ENCODE measurements at regions of chr17 and their contacts with region 1.

Region 1: DNA sequence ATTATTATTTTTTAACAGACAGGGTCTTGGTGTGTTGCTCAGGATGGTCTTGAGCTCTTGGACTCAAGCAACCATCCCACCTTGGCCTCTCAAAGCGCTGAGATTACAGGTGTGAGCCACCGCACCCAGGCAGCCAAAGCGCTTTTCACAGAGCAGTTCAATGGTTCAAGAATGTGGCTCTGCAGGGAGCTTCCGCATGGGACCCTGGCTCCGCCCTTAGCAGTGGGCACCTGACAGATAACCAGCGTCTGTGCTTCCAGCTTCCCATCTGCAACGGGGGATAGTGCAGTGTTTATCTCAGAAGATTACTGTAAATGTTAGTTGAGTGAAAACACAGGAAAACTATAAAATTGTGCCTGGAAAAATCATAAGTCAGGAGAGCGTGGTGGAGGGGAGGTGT is 99.4 kb downstream of the KCNJ12 start:
- DNase-seq: no peak
- H3K4me3 ChIP-seq: no peak overlapping the region
- H3K27ac ChIP-seq: no peak overlapping the region
- H3K4me1 ChIP-seq: no peaks in the 10 kb centered on the region
- H3K27me3 ChIP-seq: peaks cover 60% of the 10 kb centered on the region
- CTCF ChIP-seq: no peak

Region 2: GRCh38 chr17:21495281-21495680 is 19.7 kb after region 1 on chr17:
- CTCF ChIA-PET with region 1: no interaction called
- POLR2A ChIA-PET with region 1: no interaction called
- intact Hi-C with region 1: loop called (anchors 2 kb)
- DNase-seq: no peak
- H3K4me3 ChIP-seq: no peak overlapping the region
- H3K27ac ChIP-seq: no peak overlapping the region
- H3K4me1 ChIP-seq: no peaks in the 10 kb centered on the region
- H3K27me3 ChIP-seq: peaks cover 4% of the 10 kb centered on the region
- CTCF ChIP-seq: no peak

Region 3: DNA sequence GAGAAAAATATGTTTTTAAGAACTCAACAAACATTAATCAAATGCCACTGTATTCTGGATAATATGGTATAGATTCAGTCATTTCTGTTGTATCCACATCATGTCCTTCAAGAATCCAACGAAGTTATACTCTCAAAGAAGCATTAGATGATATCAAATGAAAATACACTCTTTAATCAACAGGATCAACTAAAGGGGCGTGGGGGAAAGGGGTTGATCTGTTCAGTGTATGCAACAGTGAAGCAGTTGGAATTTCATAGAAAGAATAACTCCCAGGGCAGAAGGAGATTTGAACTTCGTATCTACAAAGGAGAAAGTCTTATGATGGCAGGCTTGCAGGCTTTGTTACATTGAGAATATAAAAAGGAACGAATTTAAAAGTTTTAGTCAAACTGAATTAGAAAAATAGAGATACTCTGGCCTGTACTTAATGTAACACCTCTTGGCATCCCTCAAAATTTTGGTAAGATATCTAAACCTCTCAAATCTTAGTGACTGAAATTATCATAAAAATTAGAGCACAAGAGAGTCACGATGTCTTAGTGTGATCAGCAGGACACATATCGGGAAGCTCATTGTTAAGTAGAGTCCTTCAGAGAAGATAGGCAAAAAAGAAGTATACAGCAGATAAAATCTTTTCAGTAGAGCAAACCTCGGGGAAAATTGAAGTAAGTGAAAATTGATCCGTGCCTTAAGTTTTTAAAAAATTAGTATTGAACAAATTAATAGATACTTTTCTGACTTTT is 648.1 kb after region 1 on chr17:
- CTCF ChIA-PET with region 1: no interaction called
- POLR2A ChIA-PET with region 1: no interaction called
- intact Hi-C with region 1: no loop called
- DNase-seq: no peak
- H3K4me3 ChIP-seq: no peak overlapping the region
- H3K27ac ChIP-seq: no peak overlapping the region
- H3K4me1 ChIP-seq: no peaks in the 10 kb centered on the region
- H3K27me3 ChIP-seq: no peaks in the 10 kb centered on the region
- CTCF ChIP-seq: no peak